RWPE1 (cell line): ENCODE measurements at regions of chr20 and their contacts with region 1.

Region 1: GRCh38 chr20:7137395-7138151 is 370.1 kb downstream of the BMP2 start:
- DNase-seq: no peak
- H3K27ac ChIP-seq: no peak overlapping the region
- CTCF ChIP-seq: no peak

Region 2: GRCh38 chr20:7151676-7152470 is 14.3 kb after region 1 on chr20:
- CTCF ChIA-PET with region 1: no interaction called
- POLR2A ChIA-PET with region 1: no interaction called
- DNase-seq: peak; percentile 24
- H3K27ac ChIP-seq: no peak overlapping the region
- CTCF ChIP-seq: no peak

Region 3: DNA sequence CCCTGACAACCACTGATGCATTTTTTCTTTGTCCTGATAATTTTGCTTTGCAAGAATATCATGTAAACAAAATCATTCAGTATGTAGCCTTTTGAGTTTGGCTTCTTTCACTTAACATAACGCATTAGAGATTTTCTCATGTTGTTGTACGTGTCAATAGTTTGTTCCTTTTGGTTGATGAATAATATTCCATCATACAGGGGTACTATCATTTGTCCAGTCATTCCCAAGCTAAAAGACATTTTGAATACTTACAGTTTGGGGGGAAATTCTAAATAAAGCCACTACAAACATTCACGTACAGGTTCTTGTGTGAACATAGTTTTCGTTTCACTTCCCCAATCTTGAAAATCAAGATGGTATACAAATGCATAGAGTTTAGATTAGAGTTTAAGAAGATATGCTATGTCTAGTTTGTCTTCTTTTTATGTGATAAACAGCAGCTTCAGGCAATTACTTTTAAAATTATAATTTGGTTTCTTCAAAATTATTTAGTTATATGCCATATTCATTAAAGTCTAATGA is 797.5 kb after region 1 on chr20:
- CTCF ChIA-PET with region 1: interaction called, 10 read pairs
- POLR2A ChIA-PET with region 1: no interaction called
- DNase-seq: no peak
- H3K27ac ChIP-seq: no peak overlapping the region
- CTCF ChIP-seq: no peak